Tibial artery (tissue), 4 donors: ENCODE measurements at regions of chr9 and their contacts with region 1.

Region 1: GRCh38 chr9:110125207-110125751 is 82.7 kb downstream of the C9orf152 start:
- DNase-seq: peak; percentile 89 to 98
- H3K4me3 ChIP-seq: peak overlapping the region; percentile 49 to 55
- H3K27ac ChIP-seq: peak overlapping the region; percentile 91 to 93
- H3K4me1 ChIP-seq: peaks cover 0 to 73% (median 56%) of the 10 kb centered on the region in 4 donors
- H3K27me3 ChIP-seq: no peaks in the 10 kb centered on the region
- CTCF ChIP-seq: no peak

Region 2: GRCh38 chr9:111957856-111958652 is 1832.8 kb after region 1 on chr9:
- intact Hi-C with region 1: loop called (anchors 10 kb)
- DNase-seq: peak in 1 of 2 donors; percentile 31
- H3K4me3 ChIP-seq: peak overlapping the region in 1 of 2 donors; percentile 32
- H3K27ac ChIP-seq: no peak overlapping the region
- H3K4me1 ChIP-seq: peaks cover 0 to 11% (median 7%) of the 10 kb centered on the region in 4 donors
- H3K27me3 ChIP-seq: no peaks in the 10 kb centered on the region
- CTCF ChIP-seq: no peak